BJ (cell line): ENCODE measurements at regions of chr2 and their contacts with region 1.

Region 1: GRCh38 chr2:191637182-191638078 is 40.5 kb upstream of the NABP1 start:
- DNase-seq: no peak
- H3K4me3 ChIP-seq: no peak overlapping the region
- H3K27me3 ChIP-seq: no peaks in the 10 kb centered on the region
- CTCF ChIP-seq: no peak

Region 2: DNA sequence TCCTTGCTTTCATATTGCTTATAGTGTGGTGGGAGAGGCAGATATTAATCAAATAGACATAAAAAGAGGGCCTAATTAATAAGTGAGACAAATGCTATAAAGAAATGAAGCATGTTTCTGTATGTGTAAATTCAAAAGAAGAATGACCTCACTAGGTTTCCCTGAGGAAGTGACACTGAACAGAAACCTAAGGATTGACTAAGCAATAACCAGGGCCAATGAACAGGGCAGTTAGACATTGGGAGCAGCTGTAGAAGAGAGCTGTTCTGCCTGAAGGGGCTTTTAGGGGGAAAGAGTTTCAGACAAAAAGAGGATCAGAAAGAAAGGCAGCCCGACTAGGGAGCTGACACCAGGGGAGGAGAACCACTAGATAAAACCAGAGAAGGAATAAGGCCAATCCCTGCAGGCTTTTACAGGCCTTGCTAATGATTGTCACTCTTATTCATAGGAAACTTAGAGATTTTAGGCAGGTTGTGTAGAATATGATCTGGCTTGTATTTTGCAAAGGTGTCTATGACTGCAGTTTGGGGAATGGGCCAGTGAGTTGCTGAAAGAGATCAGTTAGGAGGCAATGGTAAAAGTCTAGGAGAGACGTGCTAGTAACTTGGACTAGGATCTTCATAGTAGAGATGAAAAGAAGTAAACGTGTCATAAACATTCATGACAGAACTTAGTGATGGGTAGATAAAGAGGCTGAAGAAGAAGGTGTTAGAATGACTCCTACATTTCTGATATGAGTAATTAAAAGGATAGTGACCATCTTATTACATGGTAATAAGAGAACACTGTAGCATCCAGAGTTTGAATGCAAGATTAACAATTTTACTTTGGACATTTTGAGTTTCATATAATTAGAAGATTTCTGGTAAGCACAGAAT is 13.7 kb after region 1 on chr2:
- CTCF ChIA-PET with region 1: interaction called, 4 read pairs
- POLR2A ChIA-PET with region 1: interaction called, 11 read pairs
- DNase-seq: no peak
- H3K4me3 ChIP-seq: no peak overlapping the region
- H3K27me3 ChIP-seq: no peaks in the 10 kb centered on the region
- CTCF ChIP-seq: no peak

Region 3: DNA sequence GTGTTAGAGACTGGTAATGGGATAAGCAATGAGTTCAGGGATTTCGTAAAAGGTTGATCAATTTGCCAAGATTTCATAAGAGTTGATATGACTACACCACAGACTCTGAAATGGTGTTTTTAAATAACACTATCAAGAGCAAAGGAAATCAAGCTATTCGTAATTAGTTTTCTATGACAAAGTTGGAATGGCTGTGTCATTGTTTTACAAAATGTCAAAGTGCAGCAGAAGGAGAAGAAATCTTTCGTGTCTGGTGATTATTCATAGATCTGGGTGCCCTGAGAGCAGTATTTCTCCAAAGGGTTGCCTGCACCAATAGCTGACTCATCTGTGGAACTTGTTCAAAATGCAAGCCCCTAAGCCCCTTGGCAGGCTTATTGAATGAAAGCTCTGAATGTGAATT is 110.6 kb after region 1 on chr2:
- CTCF ChIA-PET with region 1: no interaction called
- POLR2A ChIA-PET with region 1: no interaction called
- DNase-seq: no peak
- H3K4me3 ChIP-seq: no peak overlapping the region
- H3K27me3 ChIP-seq: no peaks in the 10 kb centered on the region; the same call in 1 of the 2 replicates
- CTCF ChIP-seq: no peak

Region 4: DNA sequence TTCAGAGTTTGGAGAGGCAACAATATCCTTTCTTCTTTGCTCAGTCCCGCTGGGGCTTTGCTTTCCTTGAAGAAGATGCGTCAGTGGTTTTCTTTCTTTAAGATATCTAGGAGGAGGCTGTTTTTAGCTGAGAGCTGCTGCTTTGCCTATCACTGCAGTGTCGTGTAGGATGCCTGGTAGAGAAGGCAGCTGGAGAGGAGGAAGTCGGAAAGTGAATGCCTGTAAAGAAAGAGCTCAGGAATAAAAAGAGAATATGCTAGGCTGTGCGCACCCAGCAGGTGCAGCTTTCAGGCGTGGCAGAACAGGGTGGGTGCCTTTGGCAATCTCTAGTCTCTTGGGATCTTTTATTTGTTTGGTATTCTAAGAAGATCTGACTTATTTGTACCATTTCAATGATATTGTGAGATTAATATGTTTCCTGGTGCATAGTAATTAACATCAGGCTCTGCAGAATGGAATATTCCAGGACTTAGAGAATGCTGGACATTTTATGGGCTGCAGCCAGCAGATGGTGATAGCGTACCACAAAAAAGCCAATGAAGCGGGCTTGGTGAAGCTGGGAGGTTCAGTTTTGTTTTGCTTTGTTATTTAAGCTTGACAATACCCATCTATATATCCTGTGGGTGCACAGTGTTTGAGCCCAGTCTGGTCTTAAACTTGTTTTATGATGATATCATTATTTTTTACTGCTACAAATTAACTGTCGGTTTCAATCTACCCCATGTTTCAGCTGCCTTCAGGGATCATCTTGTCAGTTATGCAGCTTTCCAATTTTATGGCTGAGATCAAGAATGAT is 174.6 kb after region 1 on chr2:
- CTCF ChIA-PET with region 1: no interaction called
- POLR2A ChIA-PET with region 1: no interaction called
- DNase-seq: peak; percentile 9
- H3K4me3 ChIP-seq: no peak overlapping the region
- H3K27me3 ChIP-seq: no peaks in the 10 kb centered on the region
- CTCF ChIP-seq: peak; percentile 82